SK-N-SH (cell line): ENCODE measurements at regions of chr1 and their contacts with region 1.

Region 1: DNA sequence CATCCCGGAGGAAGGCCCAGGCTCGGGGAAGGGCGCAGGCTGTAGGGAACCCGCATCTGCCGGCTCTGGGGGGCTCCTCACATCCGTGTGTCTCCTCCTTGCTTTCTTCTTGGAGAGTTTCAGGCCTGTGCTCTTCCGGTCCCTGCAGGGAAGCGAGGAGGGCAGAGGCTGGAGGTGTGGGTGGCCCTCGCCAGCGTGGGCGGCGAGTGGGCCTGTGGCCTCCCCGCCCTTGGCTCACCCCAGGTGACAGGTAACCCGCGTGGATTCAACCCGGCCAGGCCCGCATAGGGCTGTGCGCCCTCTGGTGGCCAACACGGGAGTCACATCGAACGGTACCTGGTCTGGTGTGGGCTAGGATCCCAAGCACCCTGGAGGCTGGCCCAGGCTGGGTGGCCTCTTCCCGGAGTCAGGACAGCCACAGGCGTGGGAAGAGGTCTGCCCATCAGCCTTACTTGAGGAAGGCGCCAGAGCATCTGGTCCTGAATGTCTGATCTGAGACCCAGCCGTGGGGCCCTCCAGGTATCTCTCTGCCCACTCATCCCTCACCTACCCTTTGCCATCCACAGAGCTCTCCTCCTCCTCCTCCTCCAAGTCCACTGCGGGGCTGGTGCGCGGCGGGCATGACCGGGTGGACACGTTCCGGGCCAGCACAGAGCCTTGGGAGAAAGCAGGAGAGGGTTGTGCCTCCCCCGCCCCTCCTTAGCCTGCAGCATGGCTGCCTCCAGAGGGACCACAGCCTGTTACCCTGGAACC is 9.6 kb upstream of the TNFRSF25 start:
- DNase-seq: peak; percentile 94
- H3K4me3 ChIP-seq: peak overlapping the region in 1 of 2 experiments; percentile 46; a peak in 1 of 4 replicates
- H3K27ac ChIP-seq: no peak overlapping the region
- H3K4me1 ChIP-seq: peaks cover 0 to 2% of the 10 kb centered on the region in 2 experiments; a peak in 1 of 4 replicates
- H3K27me3 ChIP-seq: no peaks in the 10 kb centered on the region
- CTCF ChIP-seq: peak; percentile 83
- EP300 ChIP-seq: no peak
- RAD21 ChIP-seq: peak; percentile 31; the same call in 1 of the 2 replicates

Region 2: DNA sequence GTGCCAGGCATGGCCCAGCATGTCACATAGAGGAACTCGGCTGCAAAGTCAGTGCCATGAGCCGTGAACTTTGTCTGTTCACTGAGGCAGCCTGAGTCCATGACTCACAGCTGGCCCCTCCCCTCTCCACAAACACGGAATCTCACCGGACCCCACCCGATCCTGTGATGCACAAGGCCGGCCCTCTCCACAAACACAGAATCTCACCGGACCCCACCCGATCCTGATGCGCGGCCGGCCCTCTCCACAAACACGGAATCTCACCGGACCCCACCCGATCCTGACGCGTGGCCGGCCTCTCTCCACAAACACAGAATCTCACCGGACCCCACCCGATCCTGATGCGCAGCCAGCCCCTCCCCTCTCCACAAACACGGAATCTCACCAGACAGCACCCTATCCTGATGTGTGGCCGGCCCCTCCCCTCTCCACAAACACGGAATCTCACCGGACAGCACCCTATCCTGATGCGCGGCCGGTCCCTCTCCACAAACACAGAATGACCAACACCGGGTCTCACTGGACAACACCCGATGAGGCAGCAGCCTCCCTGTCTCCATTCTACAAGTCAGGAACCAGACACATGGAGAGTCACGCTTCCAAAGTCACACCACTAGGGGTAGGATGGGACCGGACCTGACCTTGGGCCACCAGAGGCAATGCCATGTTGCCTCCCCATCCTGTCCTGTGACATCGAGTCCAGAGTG is 175.1 kb before region 1 on chr1:
- CTCF ChIA-PET with region 1: no interaction called
- POLR2A ChIA-PET with region 1: no interaction called
- DNase-seq: no peak
- H3K4me3 ChIP-seq: no peak overlapping the region
- H3K27ac ChIP-seq: no peak overlapping the region
- H3K4me1 ChIP-seq: peaks cover 0 to 26% of the 10 kb centered on the region in 2 experiments; a peak in 1 of 4 replicates
- H3K27me3 ChIP-seq: no peaks in the 10 kb centered on the region
- CTCF ChIP-seq: no peak
- EP300 ChIP-seq: no peak
- RAD21 ChIP-seq: no peak

Region 3: GRCh38 chr1:6347641-6348487 is 127.7 kb before region 1 on chr1:
- CTCF ChIA-PET with region 1: no interaction called
- POLR2A ChIA-PET with region 1: no interaction called
- DNase-seq: peak; percentile 77
- H3K4me3 ChIP-seq: no peak overlapping the region
- H3K27ac ChIP-seq: no peak overlapping the region
- H3K4me1 ChIP-seq: peaks cover 0 to 19% of the 10 kb centered on the region in 2 experiments; a peak in 1 of 4 replicates
- H3K27me3 ChIP-seq: no peaks in the 10 kb centered on the region
- CTCF ChIP-seq: peak; percentile 57
- EP300 ChIP-seq: no peak
- RAD21 ChIP-seq: peak; percentile 74

Region 4: GRCh38 chr1:6401673-6402072 is 73.9 kb before region 1 on chr1:
- CTCF ChIA-PET with region 1: no interaction called
- POLR2A ChIA-PET with region 1: no interaction called
- DNase-seq: no peak
- H3K4me3 ChIP-seq: no peak overlapping the region
- H3K27ac ChIP-seq: no peak overlapping the region
- H3K4me1 ChIP-seq: no peaks in the 10 kb centered on the region
- H3K27me3 ChIP-seq: no peaks in the 10 kb centered on the region
- CTCF ChIP-seq: no peak
- EP300 ChIP-seq: no peak
- RAD21 ChIP-seq: no peak

Region 5: DNA sequence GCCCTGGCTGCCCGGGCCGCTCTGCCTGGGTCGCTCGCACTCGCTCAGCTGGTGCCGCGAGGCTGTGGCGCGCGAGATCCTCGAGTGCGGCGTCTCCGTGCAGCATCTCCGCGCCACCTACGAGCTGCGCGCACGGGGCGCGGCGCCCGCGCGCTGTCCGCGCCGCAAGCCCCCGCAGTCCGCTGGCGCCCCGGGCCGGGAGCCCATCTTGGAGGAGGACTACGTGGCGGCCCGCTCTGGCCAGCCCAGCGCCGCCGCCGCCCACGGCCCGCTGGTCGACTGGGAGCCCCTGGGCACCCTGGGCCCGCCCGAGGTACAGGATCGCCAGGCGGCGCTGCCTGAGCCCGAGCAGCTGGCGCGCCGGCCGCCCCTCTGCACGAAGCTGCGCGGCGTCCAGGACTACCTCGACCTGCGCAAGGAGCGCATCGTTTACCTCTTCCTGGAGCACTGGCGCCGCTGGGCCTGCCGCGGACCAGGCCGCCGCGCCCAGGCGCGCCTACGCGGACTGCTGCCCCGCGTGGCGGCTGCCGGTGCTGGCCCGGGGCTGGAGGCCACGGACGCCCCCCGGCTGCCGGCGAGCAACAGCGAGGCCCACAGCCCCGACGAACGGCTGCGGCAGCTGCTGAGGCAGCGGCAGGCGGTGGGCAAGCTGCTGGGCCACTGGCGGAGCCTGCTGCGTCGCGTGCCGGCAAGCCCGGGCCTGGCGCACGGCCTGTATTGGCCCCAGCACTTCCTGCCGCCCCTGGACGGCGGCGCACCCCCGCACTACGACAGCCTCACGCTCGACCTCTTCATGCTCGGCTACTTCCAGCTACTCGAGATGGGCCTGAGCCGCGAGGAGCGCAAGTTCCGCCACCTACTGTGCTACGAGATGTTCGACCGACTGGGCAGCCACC is 20.5 kb before region 1 on chr1:
- CTCF ChIA-PET with region 1: interaction called, 19 read pairs
- POLR2A ChIA-PET with region 1: interaction called, 3 read pairs
- DNase-seq: peak; percentile 74
- H3K4me3 ChIP-seq: no peak overlapping the region
- H3K27ac ChIP-seq: no peak overlapping the region
- H3K4me1 ChIP-seq: no peaks in the 10 kb centered on the region; a peak in 1 of 4 replicates
- H3K27me3 ChIP-seq: peaks cover 17% of the 10 kb centered on the region
- CTCF ChIP-seq: no peak
- EP300 ChIP-seq: no peak
- RAD21 ChIP-seq: no peak

Region 6: DNA sequence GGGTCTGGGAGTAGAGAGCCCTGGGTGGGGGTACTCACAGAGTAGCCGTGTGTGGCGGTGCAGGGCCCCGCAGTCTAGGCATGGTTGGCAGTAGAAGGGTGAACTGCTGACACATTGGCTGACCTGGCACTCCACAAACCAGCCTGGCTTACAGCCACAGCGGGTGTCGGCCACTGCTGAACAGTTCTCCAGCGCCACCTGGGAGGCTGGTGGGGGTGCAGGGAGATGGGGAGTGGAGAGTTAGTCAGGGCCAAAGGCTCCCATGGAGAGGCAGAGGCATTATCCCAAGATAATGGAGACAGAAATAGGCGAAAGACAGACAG is 11.1 kb before region 1 on chr1:
- CTCF ChIA-PET with region 1: interaction called, 12 read pairs
- POLR2A ChIA-PET with region 1: interaction called, 3 read pairs
- DNase-seq: no peak
- H3K4me3 ChIP-seq: no peak overlapping the region
- H3K27ac ChIP-seq: no peak overlapping the region
- H3K4me1 ChIP-seq: no peaks in the 10 kb centered on the region
- H3K27me3 ChIP-seq: no peaks in the 10 kb centered on the region
- CTCF ChIP-seq: no peak
- EP300 ChIP-seq: no peak
- RAD21 ChIP-seq: no peak

Region 7: GRCh38 chr1:6489799-6490180 is 14.2 kb after region 1 on chr1:
- CTCF ChIA-PET with region 1: interaction called, 18 read pairs
- POLR2A ChIA-PET with region 1: no interaction called
- DNase-seq: peak; percentile 95
- H3K4me3 ChIP-seq: peak overlapping the region; percentile 75 to 76
- H3K27ac ChIP-seq: peak overlapping the region; percentile 74 to 79; a peak in 2 of 4 replicates
- H3K4me1 ChIP-seq: peaks cover 0 to 53% of the 10 kb centered on the region in 2 experiments; a peak in 1 of 4 replicates
- H3K27me3 ChIP-seq: no peaks in the 10 kb centered on the region
- CTCF ChIP-seq: peak; percentile 78
- EP300 ChIP-seq: no peak
- RAD21 ChIP-seq: peak; percentile 60

Region 8: DNA sequence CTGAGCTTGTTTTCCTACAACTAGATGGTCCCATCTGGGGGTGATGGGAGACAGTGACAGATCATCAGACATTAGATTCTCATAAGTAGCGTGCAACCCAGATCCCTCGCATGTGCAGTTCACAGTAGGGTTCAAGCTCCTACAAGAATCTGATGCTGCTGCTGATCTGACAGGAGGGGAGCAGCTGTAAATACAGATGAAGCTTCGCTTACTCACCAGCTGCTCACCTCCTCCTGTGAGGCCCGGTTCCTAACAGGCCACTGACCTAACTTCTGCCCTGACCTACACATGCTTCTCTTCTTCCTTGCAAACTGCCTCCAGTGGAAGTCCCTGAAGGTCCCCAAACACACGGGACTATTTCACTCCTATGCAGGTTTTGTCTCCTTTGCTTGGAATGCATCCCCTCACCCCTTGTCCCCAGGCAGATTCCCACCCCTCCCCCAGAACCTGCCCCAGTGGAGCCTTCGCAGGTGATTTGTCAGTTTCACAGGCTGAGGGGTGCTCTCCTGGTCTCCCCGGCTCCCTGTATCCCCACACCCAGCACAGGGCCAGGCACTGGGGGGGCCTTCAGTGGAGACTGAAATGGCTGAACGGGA is 98.6 kb after region 1 on chr1:
- CTCF ChIA-PET with region 1: no interaction called
- POLR2A ChIA-PET with region 1: no interaction called
- DNase-seq: no peak
- H3K4me3 ChIP-seq: no peak overlapping the region
- H3K27ac ChIP-seq: no peak overlapping the region
- H3K4me1 ChIP-seq: peaks cover 2 to 10% of the 10 kb centered on the region in 2 experiments; a peak in 1 of 4 replicates
- H3K27me3 ChIP-seq: no peaks in the 10 kb centered on the region
- CTCF ChIP-seq: no peak
- EP300 ChIP-seq: no peak
- RAD21 ChIP-seq: no peak